Left cardiac atrium (tissue), 4 donors: ENCODE measurements at regions of chr14 and their contacts with region 1.

Region 1: DNA sequence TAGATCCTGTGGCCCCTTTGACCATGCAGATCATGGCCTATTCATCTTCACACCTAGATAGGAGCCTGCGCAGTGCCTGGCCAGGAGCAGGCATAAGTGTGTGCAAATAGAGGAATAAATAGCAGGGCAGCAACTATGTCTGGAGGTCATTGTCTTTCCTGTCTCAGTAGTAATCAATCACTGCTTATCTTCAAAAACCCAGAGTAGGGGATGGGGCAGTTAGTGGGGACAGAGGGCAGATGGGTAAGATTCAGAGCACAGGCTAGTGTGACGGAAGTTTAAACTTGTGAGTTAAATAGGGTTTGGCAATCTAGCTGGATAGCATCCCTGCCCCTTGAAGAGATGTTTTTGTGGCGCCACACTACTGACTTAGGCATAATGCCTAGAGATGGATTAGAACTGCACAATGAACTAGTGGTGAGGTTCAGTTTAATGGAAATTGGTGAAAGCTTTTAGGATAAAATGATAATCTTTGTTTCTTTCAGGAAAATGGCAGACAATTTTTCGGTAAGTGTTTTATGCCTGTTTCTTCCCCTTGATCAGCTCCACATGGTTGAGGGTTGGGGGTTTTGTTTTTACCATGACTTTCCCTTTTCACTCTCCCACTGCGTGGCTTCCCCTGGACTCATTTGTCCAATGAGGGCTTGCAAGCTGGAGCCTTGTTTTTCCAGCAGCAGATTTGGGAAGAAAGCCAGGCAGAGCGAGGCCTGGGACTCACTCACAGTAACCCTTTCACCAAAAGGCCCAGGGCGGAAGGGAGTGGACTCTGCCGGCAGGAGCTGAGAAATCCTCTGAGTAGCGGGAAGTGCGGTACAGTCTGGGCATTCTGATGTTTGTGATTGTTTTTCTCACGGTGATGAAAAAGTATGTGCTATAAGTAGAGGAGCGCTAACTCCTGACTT is 8.1 kb downstream of the LGALS3 start:
- DNase-seq: peak; percentile 89
- ATAC-seq: peak; percentile 90 to 91

Region 2: GRCh38 chr14:55051426-55052268 is 85.5 kb before region 1 on chr14 and contains the start of gene MAPK1IP1L:
- intact Hi-C with region 1: no loop called
- DNase-seq: peak; percentile 92
- ATAC-seq: peak; percentile 98
- total RNA-seq, gene MAPK1IP1L: 59.9 to 79.5 TPM

Region 3: DNA sequence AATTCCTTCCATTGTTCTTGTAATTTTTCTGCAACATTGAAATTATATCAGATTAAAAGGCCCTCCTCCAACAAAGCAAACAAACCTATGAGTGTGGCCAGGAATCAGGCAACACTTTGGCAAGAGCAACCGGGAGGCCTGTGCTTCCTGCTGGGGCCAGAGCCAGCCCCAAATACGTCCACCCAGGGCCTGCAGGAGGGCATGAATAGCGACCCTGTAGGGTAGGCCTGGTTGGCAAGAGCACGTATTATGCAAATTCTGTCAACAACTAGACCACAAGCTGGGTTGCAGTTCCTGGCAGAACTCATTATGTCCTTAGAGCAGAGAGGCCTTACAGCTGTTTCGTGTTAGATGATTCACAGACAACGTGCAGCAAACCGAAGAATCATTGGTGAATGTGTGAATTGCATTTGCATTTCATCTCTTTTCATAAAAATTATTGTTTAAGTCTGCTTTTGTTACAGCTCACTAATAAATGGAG is 35.0 kb before region 1 on chr14:
- intact Hi-C with region 1: loop called in 1 of 2 experiments (anchors 5 kb)
- DNase-seq: peak; percentile 81
- ATAC-seq: peak; percentile 87 to 93

Region 4: DNA sequence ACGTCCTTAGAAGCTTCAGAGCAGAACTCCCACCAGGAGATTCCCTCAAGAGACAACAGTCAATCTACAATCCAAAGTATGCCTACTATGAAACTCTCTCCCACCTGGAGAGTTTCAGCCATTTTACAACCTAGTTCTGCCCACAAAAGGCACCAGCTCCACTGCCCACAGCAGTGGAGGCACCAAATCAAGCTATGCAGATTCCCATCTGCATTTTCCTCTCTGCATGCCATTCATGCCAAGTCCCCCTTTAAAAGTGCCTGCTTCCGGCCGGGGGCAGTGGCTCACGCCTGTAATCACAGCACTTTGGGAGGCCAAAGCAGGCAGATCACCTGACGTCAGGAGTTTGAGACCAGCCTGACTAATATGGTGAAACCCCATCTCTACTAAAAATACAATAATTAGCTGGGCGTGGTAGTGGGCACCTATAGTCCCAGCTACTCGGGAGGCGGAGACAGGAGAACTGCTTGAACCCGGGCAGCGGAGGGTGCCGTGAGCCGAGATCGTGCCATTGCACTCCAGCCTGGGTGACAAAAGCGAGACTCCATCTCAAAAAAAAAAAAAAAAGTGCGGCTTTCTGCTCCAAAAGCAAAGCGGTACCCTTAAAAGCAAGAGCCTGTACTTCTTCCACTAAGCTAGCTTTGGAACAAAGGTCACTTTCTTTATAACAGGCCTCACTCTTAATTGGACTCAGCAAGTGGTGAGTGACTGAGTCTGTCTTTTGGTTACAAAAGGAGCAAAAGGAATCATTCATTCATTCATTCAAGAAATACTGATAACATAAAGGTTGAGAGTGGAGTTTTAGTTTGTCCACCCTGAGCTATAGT is 64.3 kb after region 1 on chr14:
- intact Hi-C with region 1: no loop called
- DNase-seq: no peak
- ATAC-seq: no peak

Region 5: GRCh38 chr14:55212634-55213033 is 75.5 kb after region 1 on chr14:
- intact Hi-C with region 1: no loop called
- DNase-seq: no peak
- ATAC-seq: no peak

Region 6: DNA sequence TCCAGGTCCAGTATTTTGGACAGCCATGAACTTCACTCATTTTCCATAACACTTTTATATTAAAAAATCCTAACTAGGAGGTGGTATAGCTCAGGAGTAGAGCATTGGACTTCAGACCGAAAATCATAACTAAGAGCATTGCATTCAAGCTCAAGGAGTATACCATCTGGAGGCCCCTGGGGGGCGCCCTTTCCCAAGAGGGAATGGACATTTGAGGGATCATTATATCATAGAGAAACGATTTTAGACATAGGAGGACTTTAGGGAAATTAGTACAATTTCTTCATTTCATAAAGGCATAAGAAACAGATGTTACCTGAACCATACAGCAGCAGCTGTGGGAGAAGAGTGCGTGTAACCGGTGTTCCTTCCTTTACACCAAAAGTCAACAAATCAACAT is 279.7 kb after region 1 on chr14:
- intact Hi-C with region 1: no loop called
- DNase-seq: no peak
- ATAC-seq: no peak